ENCODE measurements at regions of chr12 and their contacts with region 1.

Region 1: GRCh38 chr12:102939670-102940222 is 17.7 kb upstream of the ASCL1 start:
- DNase-seq: no peak
- ATAC-seq: peak; percentile 57
- H3K4me3 ChIP-seq: no peak overlapping the region
- H3K27ac ChIP-seq: no peak overlapping the region
- H3K4me1 ChIP-seq: no peaks in the 10 kb centered on the region
- H3K27me3 ChIP-seq: no peaks in the 10 kb centered on the region
- CTCF ChIP-seq: peak; percentile 21 to 38 (median 37); a peak in 3 of 6 replicates
- EP300 ChIP-seq: no peak
- POLR2A ChIP-seq: no peak
- RAD21 ChIP-seq: peak; percentile 57; the same call in 1 of the 2 replicates

Region 2: GRCh38 chr12:102896067-102896466 is 43.7 kb before region 1 on chr12:
- CTCF ChIA-PET with region 1: interaction called, 25 read pairs
- POLR2A ChIA-PET with region 1: no interaction called
- RAD21 ChIA-PET with region 1: interaction called, 3 read pairs
- SMC1A ChIA-PET with region 1: interaction called, 18 read pairs
- in situ Hi-C with region 1: no loop called
- intact Hi-C with region 1: no loop called
- DNase-seq: no peak
- ATAC-seq: peak; percentile 81
- H3K4me3 ChIP-seq: no peak overlapping the region
- H3K27ac ChIP-seq: no peak overlapping the region
- H3K4me1 ChIP-seq: no peaks in the 10 kb centered on the region
- H3K27me3 ChIP-seq: 0 out of 4 replicates have a peak, but pooled peaks cover 0 to 2% of the 10 kb centered on the region in 2 experiments
- CTCF ChIP-seq: peak in 2 of 3 experiments; percentile 13 to 34; a peak in 2 of 6 replicates
- EP300 ChIP-seq: no peak
- POLR2A ChIP-seq: no peak
- RAD21 ChIP-seq: no peak

Region 3: GRCh38 chr12:102903337-102904007 is 36.3 kb before region 1 on chr12:
- CTCF ChIA-PET with region 1: interaction called, 19 read pairs
- POLR2A ChIA-PET with region 1: no interaction called
- RAD21 ChIA-PET with region 1: interaction called, 4 read pairs
- SMC1A ChIA-PET with region 1: interaction called, 5 read pairs
- in situ Hi-C with region 1: no loop called
- intact Hi-C with region 1: no loop called
- DNase-seq: no peak
- ATAC-seq: peak; percentile 53
- H3K4me3 ChIP-seq: no peak overlapping the region
- H3K27ac ChIP-seq: no peak overlapping the region
- H3K4me1 ChIP-seq: no peaks in the 10 kb centered on the region
- H3K27me3 ChIP-seq: no peaks in the 10 kb centered on the region
- CTCF ChIP-seq: no peak
- EP300 ChIP-seq: no peak
- POLR2A ChIP-seq: no peak
- RAD21 ChIP-seq: no peak